ENCODE measurements at regions of chr15 and their contacts with region 1.

Region 1: DNA sequence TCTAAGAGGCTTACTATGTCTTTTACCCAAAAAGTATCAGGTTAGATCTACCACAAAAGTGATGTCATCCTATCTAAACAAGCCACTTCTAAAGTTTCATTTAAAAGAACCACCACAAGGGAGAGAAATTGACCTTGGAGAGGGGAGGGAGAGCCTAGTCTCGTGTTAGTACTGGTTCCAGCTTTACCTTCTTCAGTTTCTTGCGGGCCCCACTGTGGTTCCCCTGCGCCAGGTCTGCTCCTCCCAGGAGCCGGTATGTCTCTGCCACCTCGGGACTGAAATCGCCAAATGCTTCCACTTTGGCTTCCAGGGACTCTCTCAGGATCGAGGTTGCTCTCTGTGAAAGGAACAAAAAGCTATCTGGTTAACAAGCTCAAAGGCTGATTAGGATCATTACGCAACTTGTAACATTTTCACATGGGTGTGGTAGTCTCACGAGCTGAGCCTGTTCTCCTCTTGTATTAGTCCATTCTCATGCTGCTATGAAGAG is 51.1 kb downstream of the SYNM start:
- DNase-seq: peak; percentile 58
- ATAC-seq: peak; percentile 74
- H3K4me3 ChIP-seq: no peak overlapping the region
- H3K27ac ChIP-seq: peak overlapping the region; percentile 46
- H3K4me1 ChIP-seq: peaks cover 15% of the 10 kb centered on the region
- H3K27me3 ChIP-seq: no peaks in the 10 kb centered on the region
- CTCF ChIP-seq: no peak
- EP300 ChIP-seq: no peak
- POLR2A ChIP-seq: no peak
- RAD21 ChIP-seq: no peak

Region 2: GRCh38 chr15:99014803-99015676 is 141.0 kb before region 1 on chr15:
- CTCF ChIA-PET with region 1: no interaction called
- POLR2A ChIA-PET with region 1: no interaction called
- in situ Hi-C with region 1: no loop called
- intact Hi-C with region 1: no loop called
- DNase-seq: peak; percentile 28
- ATAC-seq: peak; percentile 98
- H3K4me3 ChIP-seq: peak overlapping the region; percentile 49 to 67 (median 55); a peak in 5 of 6 replicates
- H3K27ac ChIP-seq: no peak overlapping the region
- H3K4me1 ChIP-seq: peaks cover 12% of the 10 kb centered on the region
- H3K27me3 ChIP-seq: peaks cover 0 to 40% of the 10 kb centered on the region in 2 experiments; a peak in 4 of 5 replicates
- CTCF ChIP-seq: peak; percentile 27; the same call in 1 of the 2 replicates
- EP300 ChIP-seq: no peak
- POLR2A ChIP-seq: no peak
- RAD21 ChIP-seq: no peak

Region 3: GRCh38 chr15:99181545-99181971 is 25.6 kb after region 1 on chr15:
- CTCF ChIA-PET with region 1: no interaction called
- POLR2A ChIA-PET with region 1: no interaction called
- in situ Hi-C with region 1: no loop called
- intact Hi-C with region 1: loop called (anchors 2 kb)
- DNase-seq: no peak
- ATAC-seq: peak; percentile 32; the same call in 1 of the 3 replicates
- H3K4me3 ChIP-seq: no peak overlapping the region
- H3K27ac ChIP-seq: no peak overlapping the region
- H3K4me1 ChIP-seq: peaks cover 23% of the 10 kb centered on the region
- H3K27me3 ChIP-seq: no peaks in the 10 kb centered on the region
- CTCF ChIP-seq: no peak
- EP300 ChIP-seq: no peak
- POLR2A ChIP-seq: no peak
- RAD21 ChIP-seq: no peak

Measured in HepG2 (cell line).